Tibial artery (tissue), 4 donors: ENCODE measurements at regions of chr3 and their contacts with region 1.

Region 1: DNA sequence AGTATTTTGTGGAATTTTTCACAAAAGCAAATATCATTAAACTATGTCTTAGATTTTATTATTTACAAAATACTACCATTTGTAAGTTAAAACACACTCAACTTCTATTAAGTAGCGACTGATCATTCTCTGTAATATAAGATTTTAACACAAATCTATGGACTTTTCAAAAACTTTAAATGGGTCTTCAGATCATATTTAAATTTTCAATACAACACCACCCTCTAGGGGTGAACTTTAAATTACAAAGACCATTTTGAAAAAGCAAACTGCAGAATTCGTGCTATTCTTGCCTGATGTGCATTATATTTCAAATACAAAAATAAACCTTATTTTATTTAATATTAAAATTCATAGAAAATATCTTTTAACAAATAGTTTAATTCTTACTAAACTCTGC is 8.2 kb upstream of the VGLL4 start:
- DNase-seq: no peak
- H3K4me3 ChIP-seq: no peak overlapping the region
- H3K27ac ChIP-seq: peak overlapping the region in 1 of 2 donors; percentile 25
- H3K4me1 ChIP-seq: peaks cover 0 to 47% (median 11%) of the 10 kb centered on the region in 4 donors
- H3K27me3 ChIP-seq: no peaks in the 10 kb centered on the region
- CTCF ChIP-seq: peak; percentile 43 to 56

Region 2: GRCh38 chr3:11271986-11272904 is 379.7 kb before region 1 on chr3 and contains the start of gene ATG7:
- intact Hi-C with region 1: loop called (anchors 10 kb)
- DNase-seq: peak; percentile 96 to 98
- H3K4me3 ChIP-seq: peak within 1 kb of the TSS; percentile 71 to 77
- H3K27ac ChIP-seq: peak within 1 kb of the TSS; percentile 77 to 84
- H3K4me1 ChIP-seq: peaks cover 0 to 19% (median 12%) of the 10 kb centered on the region in 4 donors
- H3K27me3 ChIP-seq: no peaks in the 10 kb centered on the region
- CTCF ChIP-seq: peak in 1 of 2 experiments; percentile 41

Region 3: DNA sequence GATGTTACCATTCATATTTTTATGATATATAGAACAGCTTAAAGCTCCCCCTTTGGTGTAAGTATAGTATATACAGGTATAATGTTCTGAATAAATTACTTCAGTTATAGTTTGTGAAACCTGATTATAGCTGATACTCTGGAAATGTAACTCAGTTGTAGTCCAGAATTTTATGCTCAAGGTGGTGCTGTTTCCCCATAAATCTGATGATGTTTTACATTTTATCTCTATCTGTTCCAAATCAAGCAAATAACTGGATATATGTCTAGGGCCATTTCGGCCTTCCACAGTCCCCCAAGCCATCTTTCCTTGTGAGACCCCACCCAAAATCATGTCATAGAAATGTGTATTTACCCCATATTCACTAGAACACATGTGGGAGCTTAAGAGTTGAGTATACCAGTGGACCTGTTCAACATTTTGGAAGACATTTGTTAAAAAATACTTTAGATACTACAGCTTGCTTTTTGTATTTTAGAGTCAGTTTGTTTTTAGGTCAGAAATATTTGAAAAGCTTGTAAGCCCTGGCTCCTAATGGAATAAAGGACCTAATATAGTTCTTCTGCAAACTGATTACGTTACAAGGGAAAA is 272.6 kb before region 1 on chr3:
- intact Hi-C with region 1: loop called (anchors 2 kb)
- DNase-seq: no peak
- H3K4me3 ChIP-seq: peak overlapping the region; percentile 17 to 32
- H3K27ac ChIP-seq: peak overlapping the region; percentile 63 to 68
- H3K4me1 ChIP-seq: peaks cover 0 to 15% (median 5%) of the 10 kb centered on the region in 4 donors
- H3K27me3 ChIP-seq: no peaks in the 10 kb centered on the region
- CTCF ChIP-seq: peak; percentile 56 to 82

Region 4: DNA sequence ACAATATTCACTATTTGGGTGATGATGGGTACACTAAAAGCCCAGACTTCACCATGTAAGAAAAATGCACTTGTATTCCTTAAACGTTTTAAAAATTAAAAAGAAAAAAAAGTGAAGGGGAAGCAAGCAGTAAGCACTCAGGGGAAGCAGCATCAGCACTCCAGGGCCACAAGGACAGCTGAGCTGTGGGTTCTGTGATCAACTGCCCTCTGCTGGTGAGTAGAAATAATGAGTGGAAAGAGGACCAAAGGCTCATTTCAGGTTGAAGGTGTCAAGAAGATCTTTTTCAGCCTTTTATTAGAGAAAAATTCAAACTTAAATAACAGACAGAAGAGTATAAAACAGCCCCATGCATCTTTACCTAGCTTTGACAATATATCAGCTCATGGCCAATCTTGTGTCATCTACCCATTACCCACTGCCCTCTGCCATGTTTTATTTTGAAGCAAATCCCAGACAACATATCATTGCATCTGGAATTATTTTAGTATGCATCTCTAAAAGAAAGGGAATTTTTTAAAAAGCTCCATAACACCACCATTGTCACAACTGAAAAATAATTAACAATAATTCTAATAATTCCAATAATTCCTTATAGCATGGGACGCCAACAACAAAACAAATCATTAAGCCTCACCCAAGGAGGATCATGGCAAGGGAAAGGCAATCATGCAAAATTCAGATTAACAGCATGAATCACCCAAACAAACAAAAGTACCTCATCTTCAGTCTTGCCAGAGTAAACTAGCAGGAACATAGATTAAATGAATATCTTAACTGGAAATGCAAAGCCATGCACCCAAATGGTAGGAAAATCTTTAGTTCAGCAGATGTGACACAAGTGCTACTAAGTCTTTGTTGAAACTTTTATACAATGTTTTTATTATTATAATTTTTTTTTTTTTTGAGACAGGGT is 152.3 kb after region 1 on chr3:
- intact Hi-C with region 1: loop called (anchors 5 kb)
- DNase-seq: peak in 1 of 2 donors; percentile 24
- H3K4me3 ChIP-seq: no peak overlapping the region
- H3K27ac ChIP-seq: no peak overlapping the region
- H3K4me1 ChIP-seq: no peaks in the 10 kb centered on the region
- H3K27me3 ChIP-seq: no peaks in the 10 kb centered on the region
- CTCF ChIP-seq: peak; percentile 70 to 80